CD4-positive, alpha-beta T cell (primary cell): ENCODE measurements at regions of chr7 and their contacts with region 1.

Region 1: DNA sequence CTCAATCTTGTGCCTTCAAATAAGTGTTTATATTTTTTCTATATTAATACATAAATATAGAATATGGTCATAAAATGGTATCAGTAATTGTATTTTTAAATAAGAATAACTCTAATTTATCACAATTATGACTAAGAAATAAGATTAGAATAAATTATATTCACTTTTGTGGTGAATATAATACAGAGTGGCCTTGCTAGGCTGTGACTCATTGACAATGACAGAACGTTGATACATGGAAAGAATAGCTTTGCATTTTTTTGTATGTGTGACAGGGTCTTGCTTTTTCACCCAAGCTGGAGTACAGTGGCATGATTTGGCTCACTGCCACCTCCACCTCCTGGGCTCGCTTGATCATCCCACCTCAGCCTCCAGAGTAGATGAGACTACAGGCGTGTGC is 47.8 kb upstream of the PCLO start:
- DNase-seq: no peak
- ATAC-seq: no peak
- H3K4me3 ChIP-seq: no peak overlapping the region
- H3K4me3 Mint-ChIP-seq: no peak overlapping the region
- H3K27ac ChIP-seq: no peak overlapping the region
- H3K27ac Mint-ChIP-seq: no peak overlapping the region
- H3K4me1 ChIP-seq: no peaks in the 10 kb centered on the region
- H3K4me1 Mint-ChIP-seq: no peaks in the 10 kb centered on the region
- H3K27me3 ChIP-seq: no peaks in the 10 kb centered on the region
- H3K27me3 Mint-ChIP-seq: no peaks in the 10 kb centered on the region
- CTCF ChIP-seq: no peak

Region 2: DNA sequence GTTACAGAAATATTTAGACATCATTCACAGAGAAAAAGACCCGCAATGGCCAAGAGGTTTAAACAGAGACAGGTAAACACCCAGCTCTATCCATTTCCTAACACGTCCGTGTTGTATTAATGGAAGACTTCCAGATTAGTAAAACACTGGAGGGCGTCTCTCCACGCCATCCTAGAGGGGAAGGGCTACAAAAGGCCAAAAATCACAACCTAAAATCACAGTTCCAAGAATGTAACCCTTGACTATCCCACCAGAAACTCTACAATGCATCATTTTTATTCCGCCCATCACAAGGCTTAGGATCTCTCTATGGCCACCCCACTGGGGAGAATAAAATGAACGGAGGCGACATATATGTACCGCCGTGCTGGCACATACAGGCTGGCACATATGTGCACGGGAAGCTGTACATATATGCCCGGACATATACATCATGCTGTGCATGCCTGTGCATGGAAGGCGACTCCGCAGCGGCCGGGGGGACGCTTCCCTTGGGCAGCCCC is 48.5 kb before region 1 on chr7:
- CTCF ChIA-PET with region 1: no interaction called
- POLR2A ChIA-PET with region 1: no interaction called
- intact Hi-C with region 1: no loop called
- DNase-seq: no peak
- ATAC-seq: no peak
- H3K4me3 ChIP-seq: no peak overlapping the region
- H3K4me3 Mint-ChIP-seq: peak overlapping the region; percentile 30
- H3K27ac ChIP-seq: no peak overlapping the region
- H3K27ac Mint-ChIP-seq: no peak overlapping the region
- H3K4me1 ChIP-seq: peaks cover 4% of the 10 kb centered on the region
- H3K4me1 Mint-ChIP-seq: peaks cover 6% of the 10 kb centered on the region
- H3K27me3 ChIP-seq: peaks cover 9 to 13% of the 10 kb centered on the region in 2 experiments
- H3K27me3 Mint-ChIP-seq: peaks cover 20% of the 10 kb centered on the region
- CTCF ChIP-seq: no peak

Region 3: DNA sequence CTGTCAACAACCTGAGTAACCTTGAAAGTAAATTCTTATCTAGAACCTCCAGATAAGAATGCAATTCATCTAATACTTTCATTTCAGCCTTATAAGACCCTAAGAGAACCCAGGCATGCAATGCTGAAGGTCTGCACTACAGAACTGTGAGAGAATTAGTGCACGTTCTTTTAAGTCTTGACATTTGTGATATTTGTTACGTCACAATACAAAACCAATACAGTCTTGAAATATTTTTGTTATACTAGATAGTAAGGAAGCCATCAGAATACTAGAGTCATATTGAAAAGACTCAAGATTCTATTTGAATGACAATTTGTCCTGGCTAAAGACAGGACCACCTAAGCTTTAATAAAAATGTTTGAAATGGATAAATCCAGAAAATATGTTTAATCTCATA is 75.7 kb after region 1 on chr7:
- CTCF ChIA-PET with region 1: no interaction called
- POLR2A ChIA-PET with region 1: no interaction called
- intact Hi-C with region 1: loop called in 1 of 2 experiments (anchors 2 kb)
- DNase-seq: no peak
- ATAC-seq: no peak
- H3K4me3 ChIP-seq: no peak overlapping the region
- H3K4me3 Mint-ChIP-seq: no peak overlapping the region
- H3K27ac ChIP-seq: no peak overlapping the region
- H3K27ac Mint-ChIP-seq: no peak overlapping the region
- H3K4me1 ChIP-seq: no peaks in the 10 kb centered on the region
- H3K4me1 Mint-ChIP-seq: no peaks in the 10 kb centered on the region
- H3K27me3 ChIP-seq: no peaks in the 10 kb centered on the region
- H3K27me3 Mint-ChIP-seq: no peaks in the 10 kb centered on the region
- CTCF ChIP-seq: no peak

Region 4: DNA sequence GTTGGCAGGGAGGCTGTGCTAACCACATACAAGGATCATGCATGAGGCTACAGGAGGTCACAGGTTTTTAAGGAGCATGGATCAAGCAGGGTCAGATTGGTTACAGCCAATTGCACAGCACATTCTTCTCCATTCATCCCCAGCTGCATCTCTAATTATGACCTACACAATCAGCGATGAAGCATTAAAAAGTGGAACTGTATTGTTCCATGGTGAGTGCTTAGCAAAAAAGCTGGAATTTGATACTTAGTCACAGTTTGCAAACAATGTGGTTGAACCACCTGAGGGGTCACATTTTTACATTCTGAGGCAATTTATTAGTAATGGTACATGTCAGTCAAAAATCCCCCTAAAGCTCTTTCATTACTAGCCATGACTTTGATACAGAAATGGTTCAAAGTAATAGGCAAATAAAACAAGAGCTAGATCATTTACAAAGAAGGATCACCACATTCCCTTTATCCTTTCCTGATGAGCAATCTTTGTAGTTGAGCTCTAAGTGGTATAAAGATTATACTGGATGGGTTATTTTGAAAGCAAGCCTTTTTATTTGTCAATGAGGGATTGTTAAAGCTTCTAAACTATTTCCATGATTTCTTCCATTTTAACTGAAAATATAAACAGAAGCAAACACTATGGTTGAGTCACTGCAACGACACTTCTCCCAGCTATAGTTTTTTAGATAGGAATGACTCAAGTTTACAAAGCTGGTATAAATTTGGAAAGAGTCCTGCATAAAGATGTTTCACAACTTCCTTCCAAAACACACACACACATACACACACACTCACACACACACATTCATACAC is 1201.9 kb after region 1 on chr7:
- CTCF ChIA-PET with region 1: no interaction called
- POLR2A ChIA-PET with region 1: no interaction called
- intact Hi-C with region 1: no loop called
- DNase-seq: no peak
- ATAC-seq: no peak
- H3K4me3 ChIP-seq: no peak overlapping the region
- H3K4me3 Mint-ChIP-seq: no peak overlapping the region
- H3K27ac ChIP-seq: no peak overlapping the region
- H3K27ac Mint-ChIP-seq: no peak overlapping the region
- H3K4me1 ChIP-seq: no peaks in the 10 kb centered on the region
- H3K4me1 Mint-ChIP-seq: no peaks in the 10 kb centered on the region
- H3K27me3 ChIP-seq: no peaks in the 10 kb centered on the region
- H3K27me3 Mint-ChIP-seq: no peaks in the 10 kb centered on the region
- CTCF ChIP-seq: no peak